B cell (primary cell): ENCODE measurements at regions of chr11 and their contacts with region 1.

Region 1: DNA sequence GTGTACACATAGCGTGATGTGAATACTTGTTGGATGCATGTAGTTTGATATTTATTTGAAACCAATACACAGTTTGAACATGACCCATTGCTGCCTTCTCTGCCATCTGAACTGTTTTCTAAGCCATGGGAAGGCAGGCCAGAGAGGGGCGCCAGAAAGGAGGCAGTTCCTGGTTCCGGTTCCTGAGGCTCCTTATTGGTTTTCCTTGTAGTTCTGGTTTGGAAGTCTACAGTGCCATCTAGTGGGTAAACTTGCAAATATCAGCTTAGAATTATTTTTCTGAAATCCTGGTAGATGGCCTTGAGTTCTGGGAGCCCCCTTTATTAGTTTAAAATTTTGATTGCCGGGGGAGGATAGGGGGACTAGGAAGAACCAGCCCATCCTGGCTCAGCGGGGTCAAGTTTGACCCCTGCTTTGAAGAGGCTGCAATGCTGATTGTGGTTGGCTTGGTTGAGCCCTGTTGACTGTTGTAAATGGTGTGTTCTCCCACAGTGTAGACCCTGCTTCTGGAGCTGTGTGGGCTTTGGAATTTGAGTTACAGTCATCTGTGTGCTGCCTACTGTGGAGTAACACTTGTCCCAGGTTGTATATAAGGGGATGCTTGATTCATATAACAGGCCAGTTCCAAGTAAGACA is 48.4 kb downstream of the GRAMD1B start:
- DNase-seq: peak; percentile 65
- ATAC-seq: no peak
- H3K4me3 ChIP-seq: no peak overlapping the region
- H3K4me3 Mint-ChIP-seq: peak overlapping the region; percentile 76
- H3K27ac ChIP-seq: no peak overlapping the region
- H3K27ac Mint-ChIP-seq: peak overlapping the region; percentile 93
- H3K4me1 ChIP-seq: peaks cover 23 to 49% of the 10 kb centered on the region in 2 donors
- H3K4me1 Mint-ChIP-seq: peaks cover 52% of the 10 kb centered on the region
- H3K27me3 ChIP-seq: peaks cover 0 to 16% (median 1%) of the 10 kb centered on the region in 4 experiments
- H3K27me3 Mint-ChIP-seq: no peaks in the 10 kb centered on the region
- CTCF ChIP-seq: peak; percentile 76

Region 2: GRCh38 chr11:123301696-123302400 is 176.6 kb before region 1 on chr11:
- CTCF ChIA-PET with region 1: interaction called, 30 read pairs
- POLR2A ChIA-PET with region 1: no interaction called
- intact Hi-C with region 1: loop called (anchors 1 kb)
- DNase-seq: peak; percentile 63
- ATAC-seq: peak; percentile 77
- H3K4me3 ChIP-seq: peak overlapping the region; percentile 24 to 45 (median 39)
- H3K4me3 Mint-ChIP-seq: peak overlapping the region; percentile 71
- H3K27ac ChIP-seq: no peak overlapping the region
- H3K27ac Mint-ChIP-seq: peak overlapping the region; percentile 39
- H3K4me1 ChIP-seq: peaks cover 14 to 25% of the 10 kb centered on the region in 2 donors
- H3K4me1 Mint-ChIP-seq: peaks cover 28% of the 10 kb centered on the region
- H3K27me3 ChIP-seq: peaks cover 0 to 12% (median 5%) of the 10 kb centered on the region in 4 experiments
- H3K27me3 Mint-ChIP-seq: peaks cover 6% of the 10 kb centered on the region
- CTCF ChIP-seq: peak; percentile 86

Region 3: DNA sequence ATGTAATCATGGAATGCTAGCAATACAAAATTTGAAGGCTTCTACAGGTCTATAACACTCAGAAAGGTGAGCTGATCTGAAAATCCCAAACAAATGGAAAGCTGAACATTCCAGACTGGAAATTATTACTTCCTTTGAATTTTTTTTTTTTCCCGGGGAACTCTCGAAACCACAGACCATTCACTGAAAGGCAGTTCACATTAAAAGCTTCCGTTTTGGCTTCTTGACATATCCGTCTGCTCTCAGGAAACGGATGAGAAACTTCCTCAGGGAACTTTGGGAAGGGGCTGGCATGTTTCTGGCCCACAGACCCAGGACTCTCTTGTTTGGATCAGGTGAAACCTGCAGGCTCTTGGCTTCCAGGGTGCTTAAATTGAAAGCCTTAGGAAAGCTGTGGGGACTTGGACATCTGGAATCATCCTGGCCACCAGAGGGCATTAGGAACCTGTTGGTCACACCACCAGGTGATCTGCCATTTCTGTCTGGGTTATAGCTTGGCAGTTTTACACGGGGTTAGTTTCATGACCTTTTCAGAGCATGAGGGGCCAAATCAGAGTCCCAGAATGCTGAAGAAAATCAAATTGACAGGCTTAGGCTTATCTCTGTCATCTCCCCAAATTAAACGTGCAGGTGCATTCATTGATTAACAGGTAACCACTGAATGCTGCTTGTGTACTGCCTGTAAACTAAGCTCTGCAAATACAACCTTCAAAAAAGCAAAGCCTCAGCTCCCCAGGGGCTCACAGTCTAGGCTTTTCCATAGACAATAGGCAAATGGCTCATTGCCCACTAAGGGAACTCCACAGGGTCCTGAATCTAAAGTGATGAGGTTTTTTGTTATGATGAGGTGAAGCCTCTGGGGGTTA is 71.1 kb before region 1 on chr11:
- CTCF ChIA-PET with region 1: interaction called, 108 read pairs
- POLR2A ChIA-PET with region 1: no interaction called
- intact Hi-C with region 1: no loop called
- DNase-seq: peak; percentile 39
- ATAC-seq: peak; percentile 39
- H3K4me3 ChIP-seq: no peak overlapping the region
- H3K4me3 Mint-ChIP-seq: no peak overlapping the region
- H3K27ac ChIP-seq: no peak overlapping the region
- H3K27ac Mint-ChIP-seq: no peak overlapping the region
- H3K4me1 ChIP-seq: no peaks in the 10 kb centered on the region
- H3K4me1 Mint-ChIP-seq: peaks cover 12% of the 10 kb centered on the region
- H3K27me3 ChIP-seq: peaks cover 0 to 2% (median 0%) of the 10 kb centered on the region in 4 experiments
- H3K27me3 Mint-ChIP-seq: peaks cover 2% of the 10 kb centered on the region
- CTCF ChIP-seq: peak; percentile 59

Region 4: DNA sequence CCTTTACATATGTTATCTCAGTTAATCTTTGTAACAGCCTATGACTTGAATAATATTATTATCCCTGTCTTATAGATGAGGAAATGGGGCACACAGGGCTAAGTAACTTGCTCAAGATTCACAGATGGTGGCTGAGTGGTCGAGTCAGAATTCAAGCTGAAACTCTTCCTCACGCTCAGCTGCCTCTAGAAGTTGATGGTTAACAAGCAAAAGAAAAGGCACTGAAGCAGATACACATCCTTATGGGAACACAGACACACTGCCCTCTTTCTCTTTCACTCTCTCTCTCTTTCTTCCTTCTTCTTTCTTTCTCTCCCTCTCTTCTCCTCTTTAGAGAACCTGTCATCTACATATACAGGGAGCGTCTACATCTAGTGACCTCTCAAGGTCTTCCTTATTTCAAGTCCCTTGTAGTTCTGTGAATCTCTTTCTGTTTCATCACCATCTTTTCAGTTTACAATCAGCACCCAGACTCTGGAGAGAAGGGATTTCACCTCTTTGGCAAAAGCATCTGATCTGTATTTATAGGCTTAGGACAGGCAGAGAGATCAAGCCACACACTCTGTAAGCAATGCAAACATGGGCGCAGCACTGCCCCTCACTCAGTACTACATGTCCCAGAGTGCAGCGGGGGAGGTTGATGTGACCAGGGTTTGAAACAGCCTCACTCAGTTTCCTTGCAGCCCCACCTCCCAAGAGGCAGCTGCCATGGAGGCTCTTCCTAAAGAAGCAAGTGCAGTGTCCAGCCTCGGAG is 27.3 kb after region 1 on chr11:
- CTCF ChIA-PET with region 1: interaction called, 10 read pairs
- POLR2A ChIA-PET with region 1: interaction called, 4 read pairs
- intact Hi-C with region 1: loop called (anchors 2 kb)
- DNase-seq: no peak
- ATAC-seq: no peak
- H3K4me3 ChIP-seq: no peak overlapping the region
- H3K4me3 Mint-ChIP-seq: no peak overlapping the region
- H3K27ac ChIP-seq: no peak overlapping the region
- H3K27ac Mint-ChIP-seq: no peak overlapping the region
- H3K4me1 ChIP-seq: no peaks in the 10 kb centered on the region
- H3K4me1 Mint-ChIP-seq: peaks cover 15% of the 10 kb centered on the region
- H3K27me3 ChIP-seq: no peaks in the 10 kb centered on the region
- H3K27me3 Mint-ChIP-seq: no peaks in the 10 kb centered on the region
- CTCF ChIP-seq: no peak

Region 5: DNA sequence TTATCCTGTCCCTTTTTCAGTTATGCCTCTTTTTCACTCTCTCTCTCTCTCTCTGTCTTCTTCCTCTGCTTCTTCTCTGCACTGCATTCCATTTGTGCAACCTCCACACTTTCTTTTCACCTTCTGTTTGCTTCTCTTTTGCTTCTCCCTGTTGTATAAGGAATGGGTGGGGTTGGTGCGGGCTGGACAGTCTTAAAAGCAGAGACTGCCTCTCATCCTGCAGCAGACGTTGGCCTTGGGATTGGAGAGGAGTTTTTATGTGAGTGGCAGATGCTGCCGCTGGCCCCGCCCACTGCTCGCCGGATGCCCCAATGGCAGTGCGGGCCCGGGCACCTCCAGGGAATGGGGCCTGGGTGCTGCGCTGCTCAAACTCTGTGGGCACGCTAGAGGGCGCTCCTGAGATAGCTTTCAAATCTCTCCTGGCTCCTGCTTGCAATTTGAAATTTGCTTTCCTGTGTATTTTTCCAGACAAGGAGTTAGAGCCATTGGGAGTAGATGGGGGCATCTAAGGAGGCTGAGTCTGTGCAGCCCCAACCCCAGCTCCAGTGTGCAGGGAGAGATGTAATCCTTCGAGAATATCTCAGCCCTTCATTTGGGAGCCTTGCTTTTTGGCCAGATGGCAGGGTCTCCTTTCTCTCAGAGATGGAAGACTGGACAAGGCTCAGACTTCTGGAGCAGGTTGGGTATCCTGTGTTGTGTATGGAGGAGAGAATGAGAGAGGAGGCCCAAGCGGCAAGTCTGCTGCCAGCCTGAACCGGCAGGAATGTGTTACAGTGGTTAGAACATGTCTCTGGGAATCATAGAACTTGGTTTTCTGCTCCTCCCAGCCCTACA is 32.8 kb after region 1 on chr11:
- CTCF ChIA-PET with region 1: interaction called, 11 read pairs
- POLR2A ChIA-PET with region 1: interaction called, 4 read pairs
- intact Hi-C with region 1: loop called (anchors 2 kb)
- DNase-seq: peak; percentile 66
- ATAC-seq: peak; percentile 99
- H3K4me3 ChIP-seq: no peak overlapping the region
- H3K4me3 Mint-ChIP-seq: peak overlapping the region; percentile 42
- H3K27ac ChIP-seq: no peak overlapping the region
- H3K27ac Mint-ChIP-seq: no peak overlapping the region
- H3K4me1 ChIP-seq: peaks cover 3% of the 10 kb centered on the region in 2 donors
- H3K4me1 Mint-ChIP-seq: peaks cover 8% of the 10 kb centered on the region
- H3K27me3 ChIP-seq: no peaks in the 10 kb centered on the region
- H3K27me3 Mint-ChIP-seq: no peaks in the 10 kb centered on the region
- CTCF ChIP-seq: peak; percentile 86

Region 6: DNA sequence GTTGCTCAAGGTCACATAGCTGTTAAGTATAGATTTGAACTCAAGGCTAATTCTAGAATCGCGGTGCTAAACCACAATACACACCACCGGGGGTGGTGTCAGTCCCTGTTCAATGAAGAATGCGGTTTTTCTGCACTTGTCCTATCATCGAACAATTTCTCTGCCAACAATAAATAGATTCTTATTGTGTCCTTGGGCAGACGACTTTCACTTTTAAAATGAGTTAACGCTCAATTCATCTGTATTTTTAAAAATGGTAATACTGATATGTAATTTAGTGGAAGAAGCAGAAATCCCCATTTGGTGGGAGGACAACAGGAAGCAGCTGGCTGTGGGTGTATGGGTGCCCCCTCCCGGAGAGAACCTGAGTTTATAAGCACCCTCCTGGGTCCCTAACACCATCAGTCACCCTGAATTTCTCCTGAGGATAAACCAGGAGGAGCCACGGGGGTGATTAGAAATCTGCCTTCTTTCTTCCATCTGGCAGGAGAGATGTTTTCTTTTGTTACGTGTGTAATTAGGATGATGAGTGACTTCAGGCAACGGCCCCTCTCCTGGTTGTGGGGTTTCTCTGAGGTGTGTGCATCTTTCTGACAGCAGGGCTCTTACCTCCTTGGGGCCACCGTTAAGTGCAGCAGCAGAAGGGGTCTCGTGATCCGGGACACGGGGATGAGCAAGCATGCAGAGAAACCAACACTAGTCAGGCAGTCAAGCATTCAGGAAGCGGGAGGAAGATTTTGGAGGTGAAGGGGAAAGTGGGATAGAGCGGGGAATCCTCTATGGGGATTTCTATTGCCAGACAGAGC is 39.3 kb after region 1 on chr11:
- CTCF ChIA-PET with region 1: interaction called, 11 read pairs
- POLR2A ChIA-PET with region 1: no interaction called
- intact Hi-C with region 1: no loop called
- DNase-seq: peak; percentile 23
- ATAC-seq: peak; percentile 72
- H3K4me3 ChIP-seq: peak overlapping the region in 1 of 5 experiments; percentile 9
- H3K4me3 Mint-ChIP-seq: peak overlapping the region; percentile 79
- H3K27ac ChIP-seq: no peak overlapping the region
- H3K27ac Mint-ChIP-seq: peak overlapping the region; percentile 89
- H3K4me1 ChIP-seq: peaks cover 14 to 17% of the 10 kb centered on the region in 2 donors
- H3K4me1 Mint-ChIP-seq: peaks cover 30% of the 10 kb centered on the region
- H3K27me3 ChIP-seq: no peaks in the 10 kb centered on the region
- H3K27me3 Mint-ChIP-seq: no peaks in the 10 kb centered on the region
- CTCF ChIP-seq: no peak

Region 7: DNA sequence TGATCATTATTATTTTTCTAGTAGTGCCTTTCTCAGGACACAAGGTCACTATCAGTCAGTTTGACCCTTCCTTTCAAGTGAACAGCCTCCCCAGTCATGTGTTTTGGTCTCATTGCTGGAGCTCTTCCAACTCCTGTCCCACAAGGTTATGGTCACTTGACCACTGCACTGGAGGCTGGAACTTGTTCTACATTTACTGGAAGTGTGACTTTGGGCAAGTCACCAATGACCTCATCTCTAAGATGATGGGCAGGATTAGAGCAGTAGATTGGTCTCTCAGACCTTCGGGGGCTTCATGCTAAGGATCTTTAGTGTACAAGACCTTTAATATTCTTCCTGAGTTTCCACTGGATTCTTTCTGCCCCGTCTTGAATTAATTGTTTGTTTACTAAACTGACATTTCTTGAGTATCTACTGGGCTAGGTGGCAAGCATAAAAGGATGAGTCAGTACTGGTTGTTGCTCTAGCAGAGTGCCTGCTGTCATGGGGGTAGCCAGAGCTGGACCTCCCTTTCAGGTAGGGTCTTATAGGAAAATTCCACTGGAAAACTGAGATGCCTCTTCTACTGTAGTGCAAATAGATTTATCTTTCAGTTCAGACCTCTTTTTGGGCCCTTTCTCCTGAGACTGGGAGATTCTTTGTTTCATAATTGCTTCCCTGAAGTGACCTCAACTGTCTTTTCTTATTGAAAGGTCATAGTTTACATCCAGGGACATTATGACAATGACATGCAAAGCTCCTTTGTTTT is 58.4 kb after region 1 on chr11:
- CTCF ChIA-PET with region 1: no interaction called
- POLR2A ChIA-PET with region 1: no interaction called
- intact Hi-C with region 1: no loop called
- DNase-seq: no peak
- ATAC-seq: no peak
- H3K4me3 ChIP-seq: no peak overlapping the region
- H3K4me3 Mint-ChIP-seq: no peak overlapping the region
- H3K27ac ChIP-seq: no peak overlapping the region
- H3K27ac Mint-ChIP-seq: no peak overlapping the region
- H3K4me1 ChIP-seq: no peaks in the 10 kb centered on the region
- H3K4me1 Mint-ChIP-seq: peaks cover 5% of the 10 kb centered on the region
- H3K27me3 ChIP-seq: no peaks in the 10 kb centered on the region
- H3K27me3 Mint-ChIP-seq: no peaks in the 10 kb centered on the region
- CTCF ChIP-seq: no peak

Region 8: DNA sequence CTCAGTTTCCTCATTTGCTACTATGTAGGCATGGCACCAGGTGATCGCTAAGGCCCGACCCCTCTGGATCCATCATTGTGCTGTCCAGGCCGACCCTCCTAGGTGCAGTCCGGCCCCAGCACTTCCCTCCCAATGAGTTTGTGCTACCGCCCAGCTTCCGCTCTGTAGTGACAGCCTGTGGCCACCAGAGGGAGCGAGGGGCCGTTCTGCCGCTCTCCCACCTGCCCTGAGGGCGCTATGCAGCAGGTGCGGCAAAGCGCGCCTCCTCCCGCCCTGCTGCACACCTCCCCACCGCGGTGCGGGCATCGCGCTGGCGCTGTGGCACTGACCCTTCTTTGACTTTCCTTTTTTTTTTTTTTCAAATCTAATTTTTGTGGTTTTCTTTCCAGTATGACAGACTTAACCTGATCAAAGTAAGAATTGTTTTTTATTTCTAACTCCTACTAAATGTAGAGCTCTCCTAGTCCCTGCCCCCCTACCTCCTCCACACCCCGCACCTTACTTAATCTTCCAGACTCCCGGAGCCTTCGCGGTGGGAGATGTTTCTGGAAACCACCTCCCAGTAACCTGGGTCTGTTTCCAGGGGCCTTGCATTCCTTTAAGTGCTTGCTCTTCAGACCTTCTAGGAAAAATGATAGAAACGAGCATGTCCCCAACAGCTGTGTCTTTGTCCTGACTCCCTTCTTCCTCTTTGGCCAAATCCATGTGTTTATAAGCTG is 102.2 kb after region 1 on chr11:
- CTCF ChIA-PET with region 1: interaction called, 12 read pairs
- POLR2A ChIA-PET with region 1: no interaction called
- intact Hi-C with region 1: no loop called
- DNase-seq: peak; percentile 74
- ATAC-seq: peak; percentile 93
- H3K4me3 ChIP-seq: no peak overlapping the region
- H3K4me3 Mint-ChIP-seq: no peak overlapping the region
- H3K27ac ChIP-seq: no peak overlapping the region
- H3K27ac Mint-ChIP-seq: no peak overlapping the region
- H3K4me1 ChIP-seq: peaks cover 9 to 16% of the 10 kb centered on the region in 2 donors
- H3K4me1 Mint-ChIP-seq: peaks cover 18% of the 10 kb centered on the region
- H3K27me3 ChIP-seq: no peaks in the 10 kb centered on the region
- H3K27me3 Mint-ChIP-seq: no peaks in the 10 kb centered on the region
- CTCF ChIP-seq: peak; percentile 94

Region 9: DNA sequence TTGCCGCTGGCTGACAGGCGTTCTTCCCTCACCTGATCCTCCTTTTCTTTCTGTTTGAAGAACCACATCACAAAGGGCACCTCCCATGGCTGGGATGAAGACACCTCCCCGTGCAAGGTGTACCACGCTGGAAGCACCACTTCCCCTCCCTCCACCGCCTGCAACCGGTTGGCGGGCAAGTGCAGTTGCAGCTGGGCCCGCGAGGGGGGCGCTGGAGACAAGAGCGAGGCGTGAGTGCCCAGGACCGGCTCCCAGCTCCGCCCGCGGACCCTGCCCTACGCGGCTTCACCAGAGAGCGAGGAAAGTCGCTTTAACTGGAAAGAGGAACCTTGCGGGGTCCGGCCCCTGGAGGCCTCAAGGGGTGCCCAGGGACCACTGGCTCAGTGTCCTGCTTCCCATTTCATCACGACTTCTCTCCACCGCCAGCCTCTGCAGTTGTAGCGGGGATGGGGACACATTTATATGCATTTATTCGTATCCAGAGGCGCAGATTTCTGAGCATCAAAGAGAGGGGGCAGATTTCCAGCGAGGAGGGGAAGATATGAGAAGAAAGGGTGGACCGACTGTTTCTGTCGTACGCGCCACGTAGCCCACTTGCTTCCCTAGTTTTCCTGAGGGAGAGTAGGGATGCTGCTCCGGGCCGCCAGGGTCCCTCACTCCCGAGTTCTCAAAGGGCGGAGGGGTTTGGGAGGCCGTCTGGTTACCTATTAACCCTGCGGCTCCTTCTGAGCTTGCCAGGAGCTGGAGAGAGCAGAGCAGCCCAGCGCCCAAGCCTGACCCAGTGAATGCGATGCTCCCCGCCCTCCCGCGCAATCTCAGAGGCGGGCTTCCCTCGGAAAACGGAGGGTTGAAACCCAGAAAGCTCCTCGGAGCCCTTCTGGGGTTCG is 1280.1 kb after region 1 on chr11:
- CTCF ChIA-PET with region 1: no interaction called
- POLR2A ChIA-PET with region 1: no interaction called
- intact Hi-C with region 1: no loop called
- DNase-seq: peak; percentile 83
- ATAC-seq: peak; percentile 67
- H3K4me3 ChIP-seq: peak overlapping the region in 4 of 5 experiments; percentile 27 to 81 (median 43)
- H3K4me3 Mint-ChIP-seq: peak overlapping the region; percentile 81
- H3K27ac ChIP-seq: peak overlapping the region in 1 of 2 donors; percentile 22
- H3K27ac Mint-ChIP-seq: no peak overlapping the region
- H3K4me1 ChIP-seq: peaks cover 38 to 53% of the 10 kb centered on the region in 2 donors
- H3K4me1 Mint-ChIP-seq: peaks cover 39% of the 10 kb centered on the region
- H3K27me3 ChIP-seq: peaks cover 0 to 22% (median 10%) of the 10 kb centered on the region in 4 experiments
- H3K27me3 Mint-ChIP-seq: peaks cover 11% of the 10 kb centered on the region
- CTCF ChIP-seq: peak; percentile 84